A673 (cell line): ENCODE measurements at regions of chr3 and their contacts with region 1.

Region 1: GRCh38 chr3:71277341-71277740 is 306.2 kb downstream of the FOXP1 start:
- DNase-seq: no peak
- H3K4me3 ChIP-seq: no peak overlapping the region
- H3K27ac ChIP-seq: no peak overlapping the region
- H3K4me1 ChIP-seq: no peaks in the 10 kb centered on the region
- H3K27me3 ChIP-seq: no peaks in the 10 kb centered on the region
- CTCF ChIP-seq: no peak

Region 2: DNA sequence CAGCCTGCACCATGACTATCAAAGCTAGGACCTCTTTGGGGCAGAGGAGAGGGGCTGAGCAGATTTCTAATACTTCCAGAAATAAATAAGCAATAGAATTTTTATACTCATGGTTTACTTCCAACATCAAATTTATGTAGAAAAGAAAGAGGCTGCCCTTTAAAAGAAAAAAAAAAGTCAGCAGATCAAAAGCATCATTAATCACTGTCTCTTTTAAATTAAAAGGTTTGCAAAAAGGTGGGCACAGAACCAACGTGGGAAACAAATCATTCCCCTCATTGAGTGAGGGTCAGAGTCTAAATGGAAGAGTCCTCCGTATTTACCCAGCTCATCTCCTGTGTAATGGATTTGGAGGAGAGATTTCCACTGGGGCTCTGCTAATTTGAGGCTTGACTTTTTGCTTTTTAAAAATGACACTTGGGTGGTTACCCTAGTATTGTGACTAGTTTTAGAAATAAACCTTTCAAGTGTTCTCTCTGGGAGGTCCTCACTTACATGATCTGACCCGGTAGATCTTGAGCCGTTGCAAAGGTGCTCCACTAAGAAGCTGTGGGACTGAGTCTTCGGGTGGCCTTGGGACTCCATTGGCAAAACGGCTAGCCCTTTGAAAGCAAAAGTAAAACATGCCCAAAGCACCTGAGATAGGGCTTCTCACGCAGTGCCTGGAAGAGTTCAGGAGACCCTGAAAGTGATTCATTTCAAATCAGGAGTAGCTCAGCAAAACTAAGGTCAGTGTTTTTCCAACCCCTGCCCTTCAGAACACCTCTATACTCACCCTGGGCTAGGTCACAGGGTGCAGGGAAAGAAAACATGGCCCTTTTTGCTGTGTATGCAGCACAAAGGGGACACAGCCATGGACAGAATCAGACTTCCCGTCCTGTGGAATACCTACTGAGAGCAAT is 14.7 kb before region 1 on chr3:
- CTCF ChIA-PET with region 1: interaction called, 13 read pairs
- POLR2A ChIA-PET with region 1: no interaction called
- intact Hi-C with region 1: no loop called
- DNase-seq: no peak
- H3K4me3 ChIP-seq: no peak overlapping the region
- H3K27ac ChIP-seq: no peak overlapping the region
- H3K4me1 ChIP-seq: no peaks in the 10 kb centered on the region
- H3K27me3 ChIP-seq: no peaks in the 10 kb centered on the region
- CTCF ChIP-seq: no peak

Region 3: GRCh38 chr3:71288269-71288930 is 11.1 kb after region 1 on chr3:
- CTCF ChIA-PET with region 1: interaction called, 10 read pairs
- POLR2A ChIA-PET with region 1: no interaction called
- intact Hi-C with region 1: no loop called
- DNase-seq: no peak
- H3K4me3 ChIP-seq: no peak overlapping the region
- H3K27ac ChIP-seq: no peak overlapping the region
- H3K4me1 ChIP-seq: no peaks in the 10 kb centered on the region
- H3K27me3 ChIP-seq: no peaks in the 10 kb centered on the region
- CTCF ChIP-seq: no peak